Ascending aorta (tissue), 2 donors: ENCODE measurements at regions of chr7 and their contacts with region 1.

Region 1: GRCh38 chr7:27143023-27143949 is at the start of gene HOXA5:
- DNase-seq: peak; percentile 42 to 94
- H3K4me3 ChIP-seq: peak within 1 kb of the TSS; percentile 75 to 91
- H3K27ac ChIP-seq: peak within 1 kb of the TSS; percentile 92 to 98
- H3K4me1 ChIP-seq: peaks cover 0 to 5% of the 10 kb centered on the region in 2 donors
- H3K27me3 ChIP-seq: no peaks in the 10 kb centered on the region
- CTCF ChIP-seq: peak; percentile 88 to 97 (median 94)
- total RNA-seq, gene HOXA5: 22.0 TPM

Region 2: DNA sequence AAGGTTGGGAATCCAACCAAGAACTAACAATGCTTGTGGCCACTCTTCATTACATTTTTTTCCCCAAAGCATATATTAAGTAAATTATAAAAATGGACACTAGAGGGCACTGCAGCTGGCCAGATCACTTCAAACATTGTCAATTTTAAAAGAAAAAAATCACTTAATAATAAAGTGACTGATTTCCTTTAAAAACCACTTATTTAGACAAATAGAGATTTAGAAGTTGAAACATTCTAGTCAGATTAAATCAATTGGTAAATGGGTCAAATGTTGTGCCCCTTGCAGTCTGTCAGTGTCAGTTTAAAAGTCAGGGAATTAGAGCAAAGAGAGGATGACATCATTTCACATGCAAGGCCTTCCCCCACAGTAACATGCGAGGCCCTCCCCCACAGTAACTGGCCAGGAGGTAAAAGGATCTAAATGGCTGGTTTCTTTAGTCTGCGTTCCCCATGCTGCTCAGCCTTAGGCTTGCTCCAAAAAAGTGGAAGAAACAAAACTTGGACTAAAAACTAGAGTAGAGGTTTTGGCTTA is 456.8 kb before region 1 on chr7:
- intact Hi-C with region 1: loop called (anchors 2 kb)
- DNase-seq: peak in 1 of 2 donors; percentile 65
- H3K4me3 ChIP-seq: no peak overlapping the region
- H3K27ac ChIP-seq: no peak overlapping the region
- H3K4me1 ChIP-seq: no peaks in the 10 kb centered on the region
- H3K27me3 ChIP-seq: no peaks in the 10 kb centered on the region
- CTCF ChIP-seq: peak; percentile 55 to 70 (median 64)

Region 3: GRCh38 chr7:26853788-26854393 is 289.4 kb before region 1 on chr7:
- intact Hi-C with region 1: loop called (anchors 2 kb)
- DNase-seq: no peak
- H3K4me3 ChIP-seq: no peak overlapping the region
- H3K27ac ChIP-seq: no peak overlapping the region
- H3K4me1 ChIP-seq: peaks cover 0 to 2% of the 10 kb centered on the region in 2 donors
- H3K27me3 ChIP-seq: no peaks in the 10 kb centered on the region
- CTCF ChIP-seq: peak; percentile 37 to 67 (median 50)